Cardiac septum (tissue), 1 donor: ENCODE measurements at regions of chr5 and their contacts with region 1.

Region 1: GRCh38 chr5:139262742-139263445 is 30.6 kb upstream of the MATR3 start:
- DNase-seq: peak; percentile 87

Region 2: DNA sequence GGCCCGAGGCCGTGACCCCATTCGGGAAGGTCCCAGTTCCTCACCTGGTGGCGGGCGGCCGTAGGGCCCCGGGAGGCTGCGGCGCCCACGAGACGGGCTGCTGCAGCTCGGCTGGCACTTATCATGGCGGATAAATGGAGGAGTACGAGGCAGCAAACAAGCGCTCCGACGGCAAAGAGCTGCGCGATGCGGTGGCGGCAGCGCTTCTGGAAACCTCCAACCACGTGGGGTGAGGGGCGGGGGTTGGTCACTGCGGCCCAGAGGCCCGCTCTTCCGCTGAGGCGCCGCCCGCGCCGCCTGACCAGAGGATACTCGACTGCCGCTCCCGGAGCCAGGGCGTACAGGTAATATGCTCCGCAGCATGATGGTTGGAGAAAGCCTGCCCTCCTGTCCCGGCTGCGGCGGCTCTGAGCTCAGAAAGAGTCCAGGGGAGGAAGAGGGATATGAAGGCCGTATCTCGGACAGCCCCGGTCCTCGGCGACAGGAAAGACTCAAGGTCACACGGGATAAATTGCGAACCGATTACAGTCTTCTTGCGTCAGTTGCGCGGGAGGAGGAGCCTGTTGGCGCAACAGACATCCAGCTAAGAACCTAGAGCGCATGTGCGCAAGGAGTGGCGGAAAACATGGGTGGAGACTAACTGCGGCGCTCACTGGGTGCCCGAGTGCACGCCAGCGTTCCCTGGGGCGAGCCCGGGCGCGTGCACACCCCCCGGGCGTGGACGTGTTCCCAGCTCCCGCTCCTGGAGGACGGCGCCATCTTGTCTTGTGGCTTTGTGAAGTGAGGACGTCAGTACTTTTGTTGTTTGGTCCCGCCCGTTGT is 687.5 kb before region 1 on chr5 and contains the start of gene HSPA9:
- intact Hi-C with region 1: loop called (anchors 2 kb)
- DNase-seq: peak; percentile 98
- total RNA-seq, gene HSPA9: 274 TPM

Region 3: GRCh38 chr5:138641547-138642298 is 621.2 kb before region 1 on chr5:
- intact Hi-C with region 1: loop called (anchors 2 kb)
- DNase-seq: peak; percentile 81

Region 4: DNA sequence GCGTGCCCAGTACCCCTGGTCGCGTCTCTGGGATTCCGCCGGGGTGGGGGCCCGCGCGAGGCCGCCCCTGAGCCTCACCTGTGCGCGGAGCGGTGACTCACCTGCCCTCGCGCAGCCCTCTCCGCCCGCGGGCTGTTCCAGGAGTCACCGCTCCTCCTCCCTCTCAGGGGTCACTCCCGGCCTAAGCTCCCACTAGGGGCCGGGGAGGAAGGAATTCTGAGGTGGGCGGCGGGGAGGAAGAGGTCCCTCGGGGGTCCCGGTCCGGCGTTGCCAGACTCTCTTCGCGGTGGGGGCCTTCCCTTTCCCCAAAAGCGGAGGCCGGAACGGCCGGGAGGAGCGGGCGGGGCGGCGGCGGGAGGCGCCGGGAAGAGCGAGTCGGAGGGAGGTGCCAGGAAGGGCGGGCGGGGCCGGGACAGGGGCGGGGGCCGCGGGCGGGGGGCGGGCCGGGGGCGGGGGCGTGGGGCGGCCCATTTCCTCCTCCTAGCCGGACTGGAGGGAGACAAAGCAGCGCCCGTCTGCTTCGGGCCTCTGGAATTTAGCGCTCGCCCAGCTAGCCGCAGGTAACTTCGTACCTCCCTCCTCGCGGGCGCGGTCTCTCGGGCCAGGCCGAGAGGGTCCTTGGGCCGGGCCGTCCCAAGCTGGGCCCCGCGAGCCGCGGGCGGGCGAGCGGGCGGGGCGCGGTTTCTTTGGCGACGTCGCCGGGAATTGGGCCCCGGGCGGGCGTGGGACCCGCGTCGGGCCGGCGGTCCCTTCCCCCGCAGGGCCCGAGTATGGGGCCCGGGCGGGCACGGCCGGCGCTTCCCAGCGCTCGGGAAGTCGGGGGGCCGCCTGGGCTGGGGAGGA is 509.7 kb before region 1 on chr5 and contains the start of gene CTNNA1:
- intact Hi-C with region 1: loop called (anchors 5 kb)
- DNase-seq: peak; percentile 93
- total RNA-seq, gene CTNNA1: 427 TPM

Region 5: DNA sequence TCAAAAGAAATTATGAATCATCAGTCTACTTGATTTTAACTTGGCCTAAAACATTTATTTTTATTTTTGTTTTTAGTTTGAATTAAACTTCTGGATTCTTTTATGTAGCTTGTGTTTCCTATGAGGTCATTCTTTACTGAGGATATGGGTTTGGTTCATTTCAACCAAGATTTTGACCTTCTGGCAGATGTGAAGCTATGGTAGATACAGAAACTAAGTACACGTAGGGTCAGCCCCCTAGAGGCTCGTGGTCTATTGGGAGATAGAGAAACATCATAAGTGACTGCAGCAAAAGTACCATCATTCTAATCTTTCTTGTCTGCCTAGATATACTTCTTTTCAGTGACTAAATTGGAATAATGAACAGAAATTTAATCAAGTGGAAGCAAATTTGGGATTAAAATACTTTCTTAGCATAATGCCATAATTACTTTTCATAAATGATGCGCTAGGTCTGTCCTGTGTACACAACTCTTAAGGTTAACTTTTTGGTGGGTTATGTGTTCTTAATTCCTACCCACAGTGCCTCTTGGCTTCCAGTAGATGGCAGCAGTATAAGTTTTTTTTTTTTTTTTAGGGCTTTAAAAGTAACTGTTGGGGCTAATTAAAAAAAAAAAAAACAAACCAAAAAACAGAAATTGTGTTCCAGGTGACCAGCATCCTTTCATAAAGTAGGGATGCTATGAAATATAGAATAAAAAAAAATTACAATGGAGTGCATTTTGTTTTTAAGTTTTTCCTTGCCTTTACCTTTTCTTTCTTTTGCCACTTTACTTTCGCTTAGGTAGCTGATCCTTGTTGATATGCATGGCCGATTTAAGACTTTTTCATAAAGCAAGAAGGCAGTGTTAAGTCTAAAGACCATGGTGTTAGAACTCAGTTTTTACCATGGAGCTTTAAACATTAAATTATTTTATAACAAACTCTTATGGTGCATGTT is 437.7 kb before region 1 on chr5:
- intact Hi-C with region 1: loop called (anchors 10 kb)
- DNase-seq: no peak

Region 6: GRCh38 chr5:139091439-139092156 is 171.3 kb before region 1 on chr5:
- intact Hi-C with region 1: loop called (anchors 2 kb)
- DNase-seq: no peak

Region 7: GRCh38 chr5:139131465-139131864 is 131.4 kb before region 1 on chr5:
- intact Hi-C with region 1: loop called (anchors 5 kb)
- DNase-seq: no peak

Region 8: GRCh38 chr5:139368613-139369012 is 105.7 kb after region 1 on chr5:
- intact Hi-C with region 1: no loop called
- DNase-seq: no peak